MCF 10A (cell line): ENCODE measurements at regions of chr10 and their contacts with region 1.

Region 1: GRCh38 chr10:33155720-33156638 is 178.5 kb downstream of the NRP1 start:
- DNase-seq: peak; percentile 80
- H3K4me3 Mint-ChIP-seq: no peak overlapping the region
- H3K27ac Mint-ChIP-seq: no peak overlapping the region
- H3K4me1 Mint-ChIP-seq: peaks cover 20% of the 10 kb centered on the region
- H3K27me3 Mint-ChIP-seq: no peaks in the 10 kb centered on the region
- CTCF ChIP-seq: peak; percentile 61

Region 2: GRCh38 chr10:32795598-32796183 is 360.3 kb before region 1 on chr10:
- CTCF ChIA-PET with region 1: no interaction called
- POLR2A ChIA-PET with region 1: no interaction called
- intact Hi-C with region 1: loop called (anchors 2 kb)
- DNase-seq: peak; percentile 43
- H3K4me3 Mint-ChIP-seq: no peak overlapping the region
- H3K27ac Mint-ChIP-seq: no peak overlapping the region
- H3K4me1 Mint-ChIP-seq: no peaks in the 10 kb centered on the region
- H3K27me3 Mint-ChIP-seq: no peaks in the 10 kb centered on the region
- CTCF ChIP-seq: peak; percentile 67

Region 3: DNA sequence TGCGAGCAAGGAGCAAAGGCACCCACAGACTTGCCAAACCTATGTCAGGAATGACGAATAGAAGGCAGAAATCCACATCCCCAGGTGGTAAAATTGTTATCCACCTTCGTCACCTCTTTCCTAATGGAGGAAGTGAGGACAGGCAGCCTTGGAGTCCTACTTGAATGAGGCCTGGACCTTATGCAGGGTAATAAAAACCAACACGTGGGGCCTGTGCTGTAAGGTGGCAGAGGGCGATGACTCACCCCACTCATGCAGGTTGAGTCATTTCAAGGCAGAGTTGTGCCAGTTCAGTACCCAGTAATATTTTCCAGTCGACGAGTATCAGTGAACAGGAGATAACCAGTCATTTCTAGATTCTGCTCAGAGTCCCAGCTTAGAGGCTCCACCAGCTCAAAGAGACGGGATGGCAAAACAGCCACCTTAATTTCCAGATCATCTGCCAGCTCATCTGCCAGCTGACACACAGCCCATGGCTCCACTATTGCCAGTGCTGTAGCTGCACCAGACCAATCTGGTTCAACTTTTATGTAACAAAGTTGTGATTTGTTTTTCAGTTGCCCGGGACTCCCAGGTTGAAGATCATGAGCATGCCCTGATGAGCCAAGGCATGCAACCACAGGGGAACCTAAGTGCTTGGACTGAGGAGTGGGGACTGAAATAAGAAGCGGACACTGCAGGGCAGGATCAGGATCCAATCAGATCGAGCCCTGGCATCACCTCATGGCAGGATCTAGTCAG is 21.8 kb before region 1 on chr10:
- CTCF ChIA-PET with region 1: interaction called, 4 read pairs
- POLR2A ChIA-PET with region 1: interaction called, 6 read pairs
- intact Hi-C with region 1: loop called (anchors 2 kb)
- DNase-seq: peak; percentile 99
- H3K4me3 Mint-ChIP-seq: peak overlapping the region; percentile 48
- H3K27ac Mint-ChIP-seq: peak overlapping the region; percentile 94
- H3K4me1 Mint-ChIP-seq: peaks cover 59% of the 10 kb centered on the region
- H3K27me3 Mint-ChIP-seq: no peaks in the 10 kb centered on the region
- CTCF ChIP-seq: no peak

Region 4: GRCh38 chr10:33143160-33143728 is 12.7 kb before region 1 on chr10:
- CTCF ChIA-PET with region 1: interaction called, 10 read pairs
- POLR2A ChIA-PET with region 1: no interaction called
- intact Hi-C with region 1: no loop called
- DNase-seq: peak; percentile 82
- H3K4me3 Mint-ChIP-seq: no peak overlapping the region
- H3K27ac Mint-ChIP-seq: no peak overlapping the region
- H3K4me1 Mint-ChIP-seq: peaks cover 20% of the 10 kb centered on the region
- H3K27me3 Mint-ChIP-seq: no peaks in the 10 kb centered on the region
- CTCF ChIP-seq: no peak

Region 5: GRCh38 chr10:33180921-33181320 is 24.9 kb after region 1 on chr10:
- CTCF ChIA-PET with region 1: no interaction called
- POLR2A ChIA-PET with region 1: no interaction called
- intact Hi-C with region 1: no loop called
- DNase-seq: no peak
- H3K4me3 Mint-ChIP-seq: no peak overlapping the region
- H3K27ac Mint-ChIP-seq: no peak overlapping the region
- H3K4me1 Mint-ChIP-seq: no peaks in the 10 kb centered on the region
- H3K27me3 Mint-ChIP-seq: no peaks in the 10 kb centered on the region
- CTCF ChIP-seq: no peak

Region 6: GRCh38 chr10:33248638-33249037 is 92.7 kb after region 1 on chr10:
- CTCF ChIA-PET with region 1: no interaction called
- POLR2A ChIA-PET with region 1: no interaction called
- intact Hi-C with region 1: no loop called
- DNase-seq: peak; percentile 87
- H3K4me3 Mint-ChIP-seq: no peak overlapping the region
- H3K27ac Mint-ChIP-seq: peak overlapping the region; percentile 91
- H3K4me1 Mint-ChIP-seq: peaks cover 43% of the 10 kb centered on the region
- H3K27me3 Mint-ChIP-seq: no peaks in the 10 kb centered on the region
- CTCF ChIP-seq: no peak